MCF 10A (cell line): ENCODE measurements at regions of chr5 and their contacts with region 1.

Region 1: GRCh38 chr5:78359831-78360673 is at the start of gene SCAMP1:
- DNase-seq: peak; percentile 90
- H3K4me3 Mint-ChIP-seq: peak within 1 kb of the TSS; percentile 97
- H3K27ac Mint-ChIP-seq: peak within 1 kb of the TSS; percentile 95
- H3K4me1 Mint-ChIP-seq: peaks cover 31% of the 10 kb centered on the region
- H3K27me3 Mint-ChIP-seq: no peaks in the 10 kb centered on the region
- CTCF ChIP-seq: peak; percentile 21
- total RNA-seq, gene SCAMP1: 26.1 and 29.3 TPM in 2 replicates

Region 2: DNA sequence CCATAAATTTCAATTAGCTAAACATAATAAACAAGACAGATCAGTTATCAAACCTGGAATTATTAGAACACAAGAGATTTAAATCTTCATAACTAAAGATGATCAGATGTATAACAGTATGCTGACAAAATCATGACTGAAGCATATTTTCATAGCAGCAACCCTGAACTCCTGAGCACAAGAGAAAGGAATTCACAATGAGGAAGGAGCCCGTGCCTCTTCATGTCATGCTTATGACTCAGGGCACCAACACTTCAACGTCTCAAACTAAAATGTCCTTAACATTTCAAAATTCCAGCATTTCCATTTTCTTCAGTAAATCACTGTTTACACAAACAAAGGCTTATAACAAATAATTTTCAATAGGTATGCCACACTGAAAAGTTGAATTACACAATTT is 72.2 kb before region 1 on chr5:
- CTCF ChIA-PET with region 1: no interaction called
- POLR2A ChIA-PET with region 1: interaction called, 139 read pairs
- intact Hi-C with region 1: no loop called
- DNase-seq: peak; percentile 59
- H3K4me3 Mint-ChIP-seq: no peak overlapping the region
- H3K27ac Mint-ChIP-seq: peak overlapping the region; percentile 33
- H3K4me1 Mint-ChIP-seq: peaks cover 47% of the 10 kb centered on the region
- H3K27me3 Mint-ChIP-seq: no peaks in the 10 kb centered on the region
- CTCF ChIP-seq: no peak

Region 3: GRCh38 chr5:78294248-78295034 is 65.6 kb before region 1 on chr5 and contains the start of gene AP3B1:
- CTCF ChIA-PET with region 1: interaction called, 5 read pairs
- POLR2A ChIA-PET with region 1: interaction called, 139 read pairs
- intact Hi-C with region 1: loop called (anchors 1 kb)
- DNase-seq: peak; percentile 99
- H3K4me3 Mint-ChIP-seq: peak within 1 kb of the TSS; percentile 91
- H3K27ac Mint-ChIP-seq: peak within 1 kb of the TSS; percentile 99
- H3K4me1 Mint-ChIP-seq: peaks cover 28% of the 10 kb centered on the region
- H3K27me3 Mint-ChIP-seq: no peaks in the 10 kb centered on the region
- CTCF ChIP-seq: no peak
- total RNA-seq, gene AP3B1: 39.7 and 40.6 TPM in 2 replicates

Region 4: GRCh38 chr5:78320401-78320800 is 39.7 kb before region 1 on chr5:
- CTCF ChIA-PET with region 1: interaction called, 10 read pairs
- POLR2A ChIA-PET with region 1: interaction called, 12 read pairs
- intact Hi-C with region 1: no loop called
- DNase-seq: peak; percentile 46
- H3K4me3 Mint-ChIP-seq: no peak overlapping the region
- H3K27ac Mint-ChIP-seq: no peak overlapping the region
- H3K4me1 Mint-ChIP-seq: peaks cover 6% of the 10 kb centered on the region
- H3K27me3 Mint-ChIP-seq: no peaks in the 10 kb centered on the region
- CTCF ChIP-seq: peak; percentile 70

Region 5: DNA sequence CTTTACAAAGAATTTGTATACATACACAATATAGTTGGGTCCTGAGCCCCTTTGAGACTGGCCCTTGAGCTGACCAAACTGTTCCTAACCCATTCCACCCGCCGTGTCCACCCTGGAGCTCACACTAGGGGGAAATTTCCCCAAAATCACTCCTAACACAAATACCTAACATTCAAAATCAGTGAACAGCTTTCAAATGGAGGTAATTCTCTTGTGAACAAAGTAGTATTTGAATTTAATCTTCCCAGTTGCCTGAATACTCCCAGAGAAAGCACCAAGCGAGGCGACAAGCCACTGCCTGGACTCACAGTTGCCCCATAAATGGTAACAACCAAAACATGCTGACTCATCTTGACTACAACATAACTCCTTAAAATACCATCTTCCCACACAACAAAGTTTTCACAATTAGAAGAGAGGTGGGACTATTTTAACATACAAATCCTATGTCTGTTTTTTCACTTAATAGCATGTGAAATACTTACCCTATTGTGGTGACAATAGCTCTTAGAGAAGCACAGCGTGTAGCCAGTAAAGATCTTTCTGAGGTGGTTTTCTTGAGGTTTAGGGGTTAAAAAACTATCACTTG is 31.4 kb before region 1 on chr5:
- CTCF ChIA-PET with region 1: interaction called, 6 read pairs
- POLR2A ChIA-PET with region 1: interaction called, 27 read pairs
- intact Hi-C with region 1: loop called (anchors 1 kb)
- DNase-seq: peak; percentile 45
- H3K4me3 Mint-ChIP-seq: no peak overlapping the region
- H3K27ac Mint-ChIP-seq: peak overlapping the region; percentile 58
- H3K4me1 Mint-ChIP-seq: peaks cover 24% of the 10 kb centered on the region
- H3K27me3 Mint-ChIP-seq: no peaks in the 10 kb centered on the region
- CTCF ChIP-seq: no peak

Region 6: DNA sequence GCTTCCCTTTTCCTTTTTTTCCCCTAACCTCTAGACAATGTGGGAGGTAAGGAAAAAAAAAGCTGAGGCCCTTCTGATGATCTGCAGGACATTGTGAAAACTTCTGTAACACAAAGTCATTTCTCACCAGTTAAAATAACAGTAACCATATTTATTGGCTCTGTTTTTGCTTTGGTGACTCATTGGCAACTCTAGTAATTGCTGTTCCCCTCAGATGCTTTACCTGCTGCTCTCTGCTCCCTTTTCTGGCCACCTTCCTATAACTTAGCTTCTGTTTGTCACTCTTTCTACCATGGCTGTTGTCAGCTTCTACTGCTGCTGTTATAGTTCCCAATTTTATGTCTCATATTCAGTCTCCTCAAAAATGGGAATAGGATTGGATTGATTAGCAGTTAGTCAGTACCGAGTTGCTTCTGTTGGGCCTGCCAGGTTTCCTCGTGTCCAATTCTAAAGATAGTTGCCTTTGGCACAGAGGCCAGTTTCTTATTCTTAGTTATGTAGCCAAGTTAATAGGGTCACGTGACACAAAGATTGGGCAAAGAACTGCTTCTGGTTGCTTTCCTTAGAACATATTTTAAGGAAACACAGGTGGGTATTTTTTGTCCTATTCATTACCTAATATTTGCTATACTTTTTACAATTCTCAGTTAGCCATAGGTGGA is 17.1 kb after region 1 on chr5:
- CTCF ChIA-PET with region 1: interaction called, 3 read pairs
- POLR2A ChIA-PET with region 1: interaction called, 23 read pairs
- intact Hi-C with region 1: no loop called
- DNase-seq: peak; percentile 71
- H3K4me3 Mint-ChIP-seq: peak overlapping the region; percentile 31
- H3K27ac Mint-ChIP-seq: peak overlapping the region; percentile 57
- H3K4me1 Mint-ChIP-seq: peaks cover 17% of the 10 kb centered on the region
- H3K27me3 Mint-ChIP-seq: no peaks in the 10 kb centered on the region
- CTCF ChIP-seq: no peak

Region 7: DNA sequence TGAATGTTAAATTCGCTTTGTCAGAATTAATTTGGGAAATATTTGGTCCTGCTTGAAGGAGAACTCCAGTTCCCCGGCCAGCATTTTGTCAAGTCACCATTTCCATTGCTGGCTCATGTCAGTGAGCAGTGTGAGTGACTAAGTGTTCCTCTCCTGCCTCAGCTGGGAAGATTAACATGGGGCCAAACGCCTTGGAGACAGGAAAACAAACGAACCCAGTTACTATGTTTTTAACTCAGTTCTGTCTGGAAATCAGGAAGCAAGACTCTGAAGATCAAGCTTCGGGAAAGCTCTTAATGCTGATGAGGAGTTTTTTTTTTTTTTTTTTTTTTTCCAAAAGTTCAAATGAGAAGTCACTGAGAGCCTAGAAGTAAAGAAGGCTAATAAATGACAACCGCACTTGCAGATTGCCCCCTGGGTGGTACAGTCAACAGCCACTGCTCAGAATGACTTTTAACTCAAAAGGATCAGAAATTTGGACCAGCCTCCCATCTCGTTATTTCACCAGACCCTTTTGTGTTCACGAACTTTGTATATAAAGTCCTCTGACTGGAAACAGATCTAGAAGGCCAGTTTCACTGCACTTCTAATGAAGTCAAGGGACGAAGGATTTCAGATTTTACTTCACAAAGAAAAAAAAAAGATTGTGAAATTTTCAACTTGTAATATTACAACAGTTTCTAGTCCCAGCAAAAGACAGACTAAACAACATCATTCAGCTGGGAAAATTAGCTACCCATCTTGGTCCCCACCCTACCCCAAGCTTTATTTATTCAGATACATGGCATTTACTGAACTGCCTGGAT is 167.2 kb after region 1 on chr5:
- CTCF ChIA-PET with region 1: no interaction called
- POLR2A ChIA-PET with region 1: interaction called, 13 read pairs
- intact Hi-C with region 1: no loop called
- DNase-seq: peak; percentile 87
- H3K4me3 Mint-ChIP-seq: peak overlapping the region; percentile 55
- H3K27ac Mint-ChIP-seq: peak overlapping the region; percentile 99
- H3K4me1 Mint-ChIP-seq: peaks cover 64% of the 10 kb centered on the region
- H3K27me3 Mint-ChIP-seq: no peaks in the 10 kb centered on the region
- CTCF ChIP-seq: no peak